H1 (cell line): ENCODE measurements at regions of chr9 and their contacts with region 1.

Region 1: DNA sequence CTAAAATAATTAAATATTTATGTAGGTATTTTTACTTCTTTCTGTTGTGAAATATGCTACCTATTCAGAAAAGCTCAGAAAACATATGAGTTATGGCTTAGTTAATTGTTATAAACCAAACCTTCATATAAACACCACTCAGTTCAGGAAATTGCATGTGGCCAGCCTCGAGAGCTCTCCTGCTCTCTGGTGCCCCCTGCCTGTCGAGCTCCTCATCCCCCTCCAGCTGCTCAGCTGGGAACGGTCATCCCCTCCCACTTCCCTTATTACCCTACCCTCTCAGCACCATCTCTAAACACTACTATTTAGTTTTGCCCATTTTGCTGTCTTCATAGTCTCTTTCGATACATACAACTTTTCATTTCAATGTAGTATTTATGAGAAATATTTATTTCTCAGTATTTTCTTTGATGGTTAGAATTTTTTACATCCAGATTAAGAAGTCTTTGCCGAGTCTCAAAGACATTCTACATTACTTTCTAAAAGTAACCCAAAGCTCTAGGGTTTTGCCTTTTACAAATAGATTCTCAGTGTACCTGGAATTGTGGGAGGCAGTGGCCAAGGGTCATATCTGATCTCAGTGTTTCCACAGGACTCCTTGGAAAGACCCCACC is 51.2 kb upstream of the SEMA4D start:
- DNase-seq: peak; percentile 29 to 90
- H3K4me3 ChIP-seq: no peak overlapping the region
- H3K27ac ChIP-seq: no peak overlapping the region
- H3K4me1 ChIP-seq: peaks cover 0 to 11% (median 7%) of the 10 kb centered on the region in 4 experiments; a peak in 5 of 7 replicates
- H3K27me3 ChIP-seq: no peaks in the 10 kb centered on the region
- CTCF ChIP-seq: peak; percentile 81 to 97 (median 93)
- EP300 ChIP-seq: no peak
- POLR2A ChIP-seq: no peak
- RAD21 ChIP-seq: peak; percentile 84 to 85

Region 2: GRCh38 chr9:89455356-89455824 is 93.7 kb before region 1 on chr9:
- CTCF ChIA-PET with region 1: interaction called, 11 read pairs
- POLR2A ChIA-PET with region 1: no interaction called
- DNase-seq: no peak
- H3K4me3 ChIP-seq: no peak overlapping the region
- H3K27ac ChIP-seq: 0 out of 2 replicates have a peak overlapping the region, but pooled peaks have one; percentile 45
- H3K4me1 ChIP-seq: peaks cover 10 to 19% (median 12%) of the 10 kb centered on the region in 4 experiments
- H3K27me3 ChIP-seq: no peaks in the 10 kb centered on the region
- CTCF ChIP-seq: no peak
- EP300 ChIP-seq: no peak
- POLR2A ChIP-seq: no peak
- RAD21 ChIP-seq: no peak

Region 3: DNA sequence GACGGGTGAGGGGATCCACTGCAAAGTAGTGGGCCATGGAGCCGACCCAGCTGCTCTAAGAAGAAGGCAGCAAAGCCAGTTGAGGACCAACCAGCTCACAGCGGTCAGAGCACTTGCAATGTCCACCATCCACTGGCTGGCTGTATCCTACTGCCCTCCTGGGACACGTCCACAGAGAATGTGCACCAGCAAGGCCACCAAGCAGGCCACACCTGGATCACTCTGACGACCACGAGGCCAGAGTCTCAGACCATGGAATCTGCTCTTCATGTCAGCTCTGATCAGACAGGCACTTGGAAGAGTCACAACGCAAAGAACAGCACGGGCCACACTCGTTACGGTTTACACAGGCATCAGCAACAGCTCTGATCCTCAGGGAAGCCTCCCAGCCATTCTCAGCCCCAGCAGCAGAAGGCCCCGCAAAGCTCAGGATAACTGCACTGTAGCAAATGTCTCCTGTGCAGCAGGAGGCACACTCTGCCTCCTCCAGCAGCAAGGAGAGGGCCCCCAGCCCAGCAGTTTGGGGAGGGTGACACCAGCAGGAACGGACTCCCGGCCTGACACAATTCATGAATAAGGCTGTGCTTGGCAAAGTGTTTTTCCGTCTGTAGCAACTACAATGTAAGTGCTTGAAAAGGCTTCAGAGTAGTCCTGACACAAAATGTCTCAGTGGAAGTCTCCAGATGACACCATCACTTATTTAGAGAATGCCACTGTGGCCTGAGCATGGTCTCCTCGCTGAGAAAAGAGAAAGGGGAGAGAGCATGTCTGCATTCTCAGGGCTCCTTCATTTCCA is 66.9 kb before region 1 on chr9:
- CTCF ChIA-PET with region 1: interaction called, 10 read pairs
- POLR2A ChIA-PET with region 1: no interaction called
- DNase-seq: no peak
- H3K4me3 ChIP-seq: no peak overlapping the region
- H3K27ac ChIP-seq: no peak overlapping the region; the same call in 1 of the 2 replicates
- H3K4me1 ChIP-seq: peaks cover 6 to 26% (median 10%) of the 10 kb centered on the region in 4 experiments
- H3K27me3 ChIP-seq: no peaks in the 10 kb centered on the region
- CTCF ChIP-seq: no peak
- EP300 ChIP-seq: no peak
- POLR2A ChIP-seq: no peak
- RAD21 ChIP-seq: no peak

Region 4: GRCh38 chr9:89536145-89536574 is 13.0 kb before region 1 on chr9:
- CTCF ChIA-PET with region 1: interaction called, 28 read pairs
- POLR2A ChIA-PET with region 1: interaction called, 4 read pairs
- DNase-seq: no peak
- H3K4me3 ChIP-seq: no peak overlapping the region
- H3K27ac ChIP-seq: no peak overlapping the region
- H3K4me1 ChIP-seq: no peaks in the 10 kb centered on the region; a peak in 1 of 7 replicates
- H3K27me3 ChIP-seq: no peaks in the 10 kb centered on the region
- CTCF ChIP-seq: no peak
- EP300 ChIP-seq: no peak
- POLR2A ChIP-seq: no peak
- RAD21 ChIP-seq: no peak